Psoas muscle (tissue), 8 donors: ENCODE measurements at regions of chr20 and their contacts with region 1.

Region 1: DNA sequence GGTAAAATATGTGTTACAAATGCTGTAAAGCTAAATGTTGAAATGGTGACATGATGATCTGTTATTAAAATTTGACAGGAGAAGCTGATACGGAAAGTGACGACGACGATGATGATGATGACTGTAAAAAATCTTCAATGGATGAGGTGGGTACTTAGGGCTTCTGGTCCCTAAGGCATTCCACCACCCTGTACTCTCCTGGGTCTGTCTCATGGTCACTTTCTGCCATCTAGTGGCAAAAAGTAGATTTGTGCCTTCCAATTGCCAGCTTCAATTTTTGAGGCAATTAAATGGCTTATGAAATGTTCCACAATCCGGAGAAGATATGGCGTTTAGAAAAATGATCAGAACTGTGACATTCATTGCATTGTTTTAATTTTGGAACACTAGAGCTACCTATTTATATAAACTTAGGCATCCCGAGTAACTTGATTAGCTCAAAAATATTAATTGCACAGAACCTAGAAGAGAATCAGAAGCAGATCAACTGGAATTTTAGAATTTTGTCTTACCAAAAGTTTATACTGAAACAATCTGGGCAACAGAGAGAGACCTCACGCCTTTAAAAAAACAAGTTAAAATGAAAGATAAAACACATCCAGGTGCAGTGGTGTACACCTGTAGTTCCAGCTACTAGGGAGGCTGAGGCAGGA is 346.5 kb upstream of the PLCB4 start:
- DNase-seq: no peak
- ATAC-seq: peak; percentile 69 to 92 (median 85)
- H3K4me3 ChIP-seq: no peak overlapping the region
- H3K27ac ChIP-seq: no peak overlapping the region
- H3K4me1 ChIP-seq: no peaks in the 10 kb centered on the region
- H3K27me3 ChIP-seq: no peaks in the 10 kb centered on the region
- CTCF ChIP-seq: peak; percentile 84

Region 2: DNA sequence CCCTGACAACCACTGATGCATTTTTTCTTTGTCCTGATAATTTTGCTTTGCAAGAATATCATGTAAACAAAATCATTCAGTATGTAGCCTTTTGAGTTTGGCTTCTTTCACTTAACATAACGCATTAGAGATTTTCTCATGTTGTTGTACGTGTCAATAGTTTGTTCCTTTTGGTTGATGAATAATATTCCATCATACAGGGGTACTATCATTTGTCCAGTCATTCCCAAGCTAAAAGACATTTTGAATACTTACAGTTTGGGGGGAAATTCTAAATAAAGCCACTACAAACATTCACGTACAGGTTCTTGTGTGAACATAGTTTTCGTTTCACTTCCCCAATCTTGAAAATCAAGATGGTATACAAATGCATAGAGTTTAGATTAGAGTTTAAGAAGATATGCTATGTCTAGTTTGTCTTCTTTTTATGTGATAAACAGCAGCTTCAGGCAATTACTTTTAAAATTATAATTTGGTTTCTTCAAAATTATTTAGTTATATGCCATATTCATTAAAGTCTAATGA is 787.3 kb before region 1 on chr20:
- intact Hi-C with region 1: loop called (anchors 2 to 5 kb)
- DNase-seq: no peak
- ATAC-seq: no peak
- H3K4me3 ChIP-seq: no peak overlapping the region
- H3K27ac ChIP-seq: no peak overlapping the region
- H3K4me1 ChIP-seq: no peaks in the 10 kb centered on the region
- H3K27me3 ChIP-seq: no peaks in the 10 kb centered on the region
- CTCF ChIP-seq: no peak

Region 3: DNA sequence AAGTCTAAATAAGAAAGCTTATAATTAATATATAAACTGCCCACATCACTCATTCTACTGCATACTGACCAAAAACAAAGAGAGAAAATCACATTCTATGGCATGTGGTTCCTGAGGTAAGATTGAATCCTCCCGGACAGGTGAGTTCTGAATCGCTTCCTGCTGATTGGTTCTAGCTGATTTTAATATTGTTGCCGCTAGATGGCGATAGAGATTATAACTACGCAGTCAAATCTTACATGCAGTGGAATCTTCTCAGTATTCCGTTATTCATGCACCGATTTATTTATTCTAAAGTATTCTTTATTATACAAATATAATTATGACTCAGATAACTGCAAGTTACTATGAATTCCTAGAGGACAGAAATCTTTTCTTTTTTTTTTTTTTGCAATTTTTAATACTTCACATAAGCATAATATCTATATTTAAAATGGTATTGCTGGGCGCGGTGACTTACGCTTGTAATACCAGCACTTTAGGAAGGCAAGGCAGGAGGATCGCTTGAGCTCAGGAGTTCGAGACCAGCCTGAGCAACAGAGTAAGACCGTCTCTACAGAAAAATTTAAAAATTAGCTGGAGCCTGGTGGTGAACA is 678.6 kb before region 1 on chr20:
- intact Hi-C with region 1: loop called (anchors 1 to 2 kb)
- DNase-seq: no peak
- ATAC-seq: peak; percentile 59 to 93 (median 72)
- H3K4me3 ChIP-seq: no peak overlapping the region
- H3K27ac ChIP-seq: no peak overlapping the region
- H3K4me1 ChIP-seq: no peaks in the 10 kb centered on the region
- H3K27me3 ChIP-seq: no peaks in the 10 kb centered on the region
- CTCF ChIP-seq: peak; percentile 85

Region 4: DNA sequence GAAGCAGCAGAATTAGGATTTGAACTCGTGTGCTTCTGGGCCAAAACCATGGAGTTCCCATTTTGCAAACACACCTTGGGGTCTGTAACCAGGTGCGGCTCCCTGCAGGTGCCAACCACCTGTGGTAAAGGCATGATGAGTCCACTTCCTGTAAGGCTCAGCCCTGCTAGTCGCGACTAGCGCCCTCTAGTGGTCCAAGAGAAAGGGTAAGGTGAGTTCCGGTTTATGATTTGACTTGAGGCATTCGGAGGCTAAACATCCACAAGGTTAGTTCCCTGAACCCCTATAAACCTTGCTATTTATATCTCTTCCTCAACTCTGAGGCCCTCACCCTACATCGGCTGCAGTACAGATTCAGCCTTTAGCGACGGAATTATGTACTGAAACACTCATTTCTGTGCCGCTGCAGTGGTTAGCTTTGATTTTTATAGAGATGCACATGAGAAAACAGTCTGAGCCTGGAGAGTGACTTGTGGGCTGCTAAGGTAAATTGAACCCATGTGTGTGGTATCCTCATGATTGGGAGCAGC is 416.9 kb before region 1 on chr20:
- intact Hi-C with region 1: loop called in 1 of 2 experiments (anchors 10 kb)
- DNase-seq: peak in 1 of 2 donors; percentile 19
- ATAC-seq: peak in 3 of 4 donors; percentile 44 to 80 (median 69)
- H3K4me3 ChIP-seq: no peak overlapping the region
- H3K27ac ChIP-seq: no peak overlapping the region
- H3K4me1 ChIP-seq: peaks cover 18% of the 10 kb centered on the region
- H3K27me3 ChIP-seq: no peaks in the 10 kb centered on the region
- CTCF ChIP-seq: peak; percentile 59

Region 5: DNA sequence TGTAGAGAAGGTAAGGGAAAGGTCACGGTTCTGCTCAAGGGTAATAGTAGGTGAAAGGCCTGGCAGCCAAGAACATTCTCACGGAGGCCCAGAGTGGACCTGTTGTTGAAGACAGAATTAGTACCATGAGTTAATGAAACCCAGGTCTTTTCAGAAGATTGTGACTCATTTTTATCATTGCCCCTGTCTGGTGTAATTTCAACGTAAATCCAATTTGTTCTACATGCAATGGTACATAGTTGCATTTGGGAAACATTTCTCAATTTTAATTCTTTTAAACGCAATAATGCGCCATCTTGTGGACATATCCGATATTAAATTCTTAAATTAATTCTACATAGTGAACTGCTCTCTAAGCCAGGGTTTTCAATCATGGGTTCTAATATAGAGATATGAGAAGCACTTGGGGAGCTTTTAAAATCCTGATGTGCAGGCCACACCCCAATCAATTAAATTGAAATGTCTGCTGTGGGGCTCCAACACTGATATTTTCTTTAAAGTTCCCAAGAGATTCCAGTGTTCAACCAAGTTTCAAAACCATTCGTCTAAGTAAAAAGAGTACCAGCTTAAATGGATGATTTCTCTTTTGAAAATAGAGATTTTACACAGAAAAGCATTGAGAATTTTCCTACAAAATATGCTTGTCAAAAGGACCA is 332.9 kb before region 1 on chr20:
- intact Hi-C with region 1: loop called (anchors 5 to 10 kb)
- DNase-seq: no peak
- ATAC-seq: peak in 3 of 4 donors; percentile 42 to 79 (median 66)
- H3K4me3 ChIP-seq: peak overlapping the region; percentile 37
- H3K27ac ChIP-seq: no peak overlapping the region
- H3K4me1 ChIP-seq: peaks cover 27% of the 10 kb centered on the region
- H3K27me3 ChIP-seq: no peaks in the 10 kb centered on the region
- CTCF ChIP-seq: peak; percentile 62